PC-3 (cell line): ENCODE measurements at regions of chrX and their contacts with region 1.

Region 1: GRCh38 chrX:133792198-133792953 is 193.0 kb downstream of the GPC3 start:
- DNase-seq: peak; percentile 73
- ATAC-seq: peak; percentile 79
- H3K4me3 ChIP-seq: no peak overlapping the region; the same call in 1 of the 2 replicates
- H3K27ac ChIP-seq: no peak overlapping the region
- H3K4me1 ChIP-seq: no peaks in the 10 kb centered on the region
- H3K27me3 ChIP-seq: peaks cover 18% of the 10 kb centered on the region
- CTCF ChIP-seq: peak; percentile 99

Region 2: GRCh38 chrX:132353430-132353829 is 1438.9 kb before region 1 on chrX:
- CTCF ChIA-PET with region 1: no interaction called
- POLR2A ChIA-PET with region 1: no interaction called
- intact Hi-C with region 1: no loop called
- DNase-seq: no peak
- ATAC-seq: no peak
- H3K4me3 ChIP-seq: no peak overlapping the region
- H3K27ac ChIP-seq: no peak overlapping the region
- H3K4me1 ChIP-seq: no peaks in the 10 kb centered on the region
- H3K27me3 ChIP-seq: no peaks in the 10 kb centered on the region
- CTCF ChIP-seq: no peak

Region 3: GRCh38 chrX:133838761-133839676 is 46.6 kb after region 1 on chrX:
- CTCF ChIA-PET with region 1: no interaction called
- POLR2A ChIA-PET with region 1: no interaction called
- intact Hi-C with region 1: loop called (anchors 1 kb)
- DNase-seq: peak; percentile 67
- ATAC-seq: peak; percentile 33; the same call in 1 of the 2 replicates
- H3K4me3 ChIP-seq: no peak overlapping the region
- H3K27ac ChIP-seq: no peak overlapping the region
- H3K4me1 ChIP-seq: no peaks in the 10 kb centered on the region
- H3K27me3 ChIP-seq: peaks cover 25% of the 10 kb centered on the region
- CTCF ChIP-seq: peak; percentile 65

Region 4: DNA sequence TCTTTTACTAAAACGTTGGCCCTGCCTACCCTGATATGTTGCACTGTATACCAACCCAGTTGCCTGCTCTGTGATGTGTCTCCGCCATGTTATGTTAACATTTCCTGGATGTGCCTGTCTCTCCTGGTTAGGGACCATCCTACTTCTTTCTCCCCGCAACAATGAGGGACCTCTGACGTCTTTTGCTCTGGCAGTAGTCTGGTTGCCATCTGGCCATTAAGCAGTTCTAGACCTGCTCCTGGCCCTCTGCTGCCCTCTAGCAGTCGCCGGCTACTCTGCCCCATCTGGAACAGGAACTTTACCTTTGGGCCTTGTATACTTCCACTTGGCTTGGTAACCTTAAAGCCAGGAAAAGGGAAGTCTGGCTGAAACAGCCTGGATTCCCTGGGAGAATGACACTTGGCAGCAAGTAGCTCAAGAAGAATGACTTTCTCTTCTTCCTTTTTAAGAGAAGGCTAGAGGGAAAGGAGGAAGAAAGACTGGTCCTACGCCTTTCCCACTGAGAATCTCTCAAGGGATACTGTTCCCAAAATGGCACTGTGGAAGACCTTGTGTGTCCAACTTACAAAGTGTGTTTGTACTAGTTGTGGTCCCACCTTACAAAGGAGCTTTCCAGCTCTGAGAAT is 129.5 kb after region 1 on chrX:
- CTCF ChIA-PET with region 1: no interaction called
- POLR2A ChIA-PET with region 1: no interaction called
- intact Hi-C with region 1: loop called (anchors 1 kb)
- DNase-seq: peak; percentile 50
- ATAC-seq: peak; percentile 86
- H3K4me3 ChIP-seq: no peak overlapping the region
- H3K27ac ChIP-seq: no peak overlapping the region
- H3K4me1 ChIP-seq: no peaks in the 10 kb centered on the region
- H3K27me3 ChIP-seq: peaks cover 5% of the 10 kb centered on the region; the same call in 1 of the 2 replicates
- CTCF ChIP-seq: peak; percentile 78

Region 5: DNA sequence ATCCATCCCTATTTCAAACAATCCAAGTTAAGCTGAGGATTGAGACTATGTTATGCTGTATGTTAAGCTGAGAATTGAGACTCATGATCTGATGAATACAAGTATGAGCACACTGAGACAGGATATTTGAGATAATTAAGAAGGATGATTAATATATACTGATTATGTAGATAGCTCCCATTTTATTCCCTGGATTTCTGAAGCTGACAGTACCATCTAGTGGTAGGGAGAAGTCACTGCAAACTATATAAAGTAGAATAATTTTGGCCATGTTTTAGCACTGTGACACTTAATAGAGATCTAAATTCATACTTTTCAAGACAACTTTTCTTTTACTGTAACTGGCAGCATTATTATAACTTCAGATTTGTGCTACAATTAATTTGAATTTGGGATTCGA is 603.8 kb after region 1 on chrX:
- CTCF ChIA-PET with region 1: no interaction called
- POLR2A ChIA-PET with region 1: no interaction called
- intact Hi-C with region 1: loop called (anchors 5 kb)
- DNase-seq: peak; percentile 37
- ATAC-seq: peak; percentile 40; the same call in 1 of the 2 replicates
- H3K4me3 ChIP-seq: no peak overlapping the region
- H3K27ac ChIP-seq: no peak overlapping the region
- H3K4me1 ChIP-seq: no peaks in the 10 kb centered on the region
- H3K27me3 ChIP-seq: no peaks in the 10 kb centered on the region
- CTCF ChIP-seq: peak; percentile 75